ENCODE measurements at regions of chr14 and their contacts with region 1.

Region 1: GRCh38 chr14:93160353-93160801 is 24.3 kb downstream of the MOAP1 start:
- DNase-seq: no peak
- ATAC-seq: peak; percentile 48
- H3K4me3 ChIP-seq: no peak overlapping the region
- H3K27ac ChIP-seq: no peak overlapping the region
- H3K4me1 ChIP-seq: no peaks in the 10 kb centered on the region
- H3K27me3 ChIP-seq: no peaks in the 10 kb centered on the region
- CTCF ChIP-seq: peak; percentile 23 to 54 (median 47); a peak in 4 of 6 replicates
- EP300 ChIP-seq: no peak
- POLR2A ChIP-seq: no peak
- RAD21 ChIP-seq: peak; percentile 48

Region 2: GRCh38 chr14:92719890-92720323 is 440.5 kb before region 1 on chr14:
- CTCF ChIA-PET with region 1: interaction called, 3 read pairs
- POLR2A ChIA-PET with region 1: no interaction called
- RAD21 ChIA-PET with region 1: no interaction called
- SMC1A ChIA-PET with region 1: no interaction called
- in situ Hi-C with region 1: no loop called
- intact Hi-C with region 1: loop called (anchors 10 kb)
- DNase-seq: no peak
- ATAC-seq: no peak
- H3K4me3 ChIP-seq: no peak overlapping the region
- H3K27ac ChIP-seq: no peak overlapping the region
- H3K4me1 ChIP-seq: no peaks in the 10 kb centered on the region
- H3K27me3 ChIP-seq: no peaks in the 10 kb centered on the region
- CTCF ChIP-seq: no peak
- EP300 ChIP-seq: no peak
- POLR2A ChIP-seq: no peak
- RAD21 ChIP-seq: no peak

Region 3: DNA sequence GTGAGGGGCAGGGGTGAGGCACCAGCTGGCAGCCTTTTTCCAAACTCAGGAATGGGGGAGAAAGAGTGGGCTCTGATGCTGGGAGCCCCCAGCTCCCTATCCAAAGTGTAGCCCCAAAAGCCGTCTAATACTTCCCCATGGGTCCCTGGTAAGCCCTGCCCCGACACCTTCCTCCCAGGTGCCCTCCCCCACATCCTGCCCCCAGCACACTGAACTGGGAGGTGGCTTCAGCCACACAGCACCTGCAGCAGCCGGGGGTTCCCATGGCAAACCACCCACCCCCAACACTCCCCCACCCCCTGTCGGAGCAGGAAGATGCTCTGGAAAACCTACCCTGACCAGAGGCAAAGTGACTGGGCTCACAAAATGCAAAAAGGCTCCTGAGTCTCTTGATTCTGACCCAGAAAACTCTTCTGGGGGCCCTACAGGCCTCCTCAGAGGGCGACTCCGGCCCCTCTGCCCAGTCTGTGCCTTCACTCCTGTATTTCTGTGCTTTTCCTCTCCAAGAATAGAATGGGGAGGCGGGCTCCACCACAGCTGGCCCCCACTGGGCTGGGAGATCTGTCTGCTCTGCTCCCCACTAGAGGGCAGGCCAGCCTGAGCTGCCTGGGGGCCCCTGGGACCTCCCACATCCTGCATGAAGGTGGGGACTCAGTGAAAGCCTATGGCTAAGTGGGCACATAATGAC is 126.2 kb before region 1 on chr14:
- CTCF ChIA-PET with region 1: interaction called, 3 read pairs
- POLR2A ChIA-PET with region 1: no interaction called
- RAD21 ChIA-PET with region 1: no interaction called
- SMC1A ChIA-PET with region 1: interaction called, 3 read pairs
- in situ Hi-C with region 1: no loop called
- intact Hi-C with region 1: loop called (anchors 1 kb)
- DNase-seq: no peak
- ATAC-seq: peak; percentile 96
- H3K4me3 ChIP-seq: no peak overlapping the region
- H3K27ac ChIP-seq: peak overlapping the region; percentile 39
- H3K4me1 ChIP-seq: peaks cover 41% of the 10 kb centered on the region
- H3K27me3 ChIP-seq: no peaks in the 10 kb centered on the region
- CTCF ChIP-seq: peak; percentile 78 to 85 (median 82)
- EP300 ChIP-seq: no peak
- POLR2A ChIP-seq: no peak
- RAD21 ChIP-seq: peak; percentile 84

Region 4: DNA sequence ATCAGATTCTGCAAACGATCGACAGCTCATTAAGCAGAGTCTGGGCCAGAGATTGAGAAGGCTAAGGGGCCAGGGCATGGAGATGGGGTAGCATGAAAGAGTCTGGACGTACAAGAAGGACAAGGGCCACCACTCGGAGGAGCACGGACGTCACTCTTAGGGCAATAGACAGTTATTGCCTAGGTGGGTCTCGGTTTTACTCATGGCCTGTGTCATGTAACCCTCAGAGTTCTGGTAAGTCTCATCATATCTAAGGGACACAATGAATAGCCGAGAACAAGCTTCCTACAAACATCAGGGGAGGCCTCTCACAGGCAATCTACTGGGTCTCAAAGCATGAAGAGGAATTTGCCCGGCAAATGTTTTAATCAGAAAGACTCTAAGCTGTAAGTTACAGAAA is 14.3 kb before region 1 on chr14:
- CTCF ChIA-PET with region 1: interaction called, 9 read pairs
- POLR2A ChIA-PET with region 1: interaction called, 4 read pairs
- RAD21 ChIA-PET with region 1: interaction called, 9 read pairs
- SMC1A ChIA-PET with region 1: interaction called, 10 read pairs
- in situ Hi-C with region 1: no loop called
- intact Hi-C with region 1: no loop called
- DNase-seq: no peak
- ATAC-seq: peak; percentile 85
- H3K4me3 ChIP-seq: no peak overlapping the region
- H3K27ac ChIP-seq: no peak overlapping the region
- H3K4me1 ChIP-seq: peaks cover 4% of the 10 kb centered on the region; the same call in 1 of the 2 replicates
- H3K27me3 ChIP-seq: no peaks in the 10 kb centered on the region
- CTCF ChIP-seq: no peak
- EP300 ChIP-seq: peak in 1 of 2 experiments; percentile 64; a peak in 1 of 4 replicates
- POLR2A ChIP-seq: no peak
- RAD21 ChIP-seq: no peak

Region 5: DNA sequence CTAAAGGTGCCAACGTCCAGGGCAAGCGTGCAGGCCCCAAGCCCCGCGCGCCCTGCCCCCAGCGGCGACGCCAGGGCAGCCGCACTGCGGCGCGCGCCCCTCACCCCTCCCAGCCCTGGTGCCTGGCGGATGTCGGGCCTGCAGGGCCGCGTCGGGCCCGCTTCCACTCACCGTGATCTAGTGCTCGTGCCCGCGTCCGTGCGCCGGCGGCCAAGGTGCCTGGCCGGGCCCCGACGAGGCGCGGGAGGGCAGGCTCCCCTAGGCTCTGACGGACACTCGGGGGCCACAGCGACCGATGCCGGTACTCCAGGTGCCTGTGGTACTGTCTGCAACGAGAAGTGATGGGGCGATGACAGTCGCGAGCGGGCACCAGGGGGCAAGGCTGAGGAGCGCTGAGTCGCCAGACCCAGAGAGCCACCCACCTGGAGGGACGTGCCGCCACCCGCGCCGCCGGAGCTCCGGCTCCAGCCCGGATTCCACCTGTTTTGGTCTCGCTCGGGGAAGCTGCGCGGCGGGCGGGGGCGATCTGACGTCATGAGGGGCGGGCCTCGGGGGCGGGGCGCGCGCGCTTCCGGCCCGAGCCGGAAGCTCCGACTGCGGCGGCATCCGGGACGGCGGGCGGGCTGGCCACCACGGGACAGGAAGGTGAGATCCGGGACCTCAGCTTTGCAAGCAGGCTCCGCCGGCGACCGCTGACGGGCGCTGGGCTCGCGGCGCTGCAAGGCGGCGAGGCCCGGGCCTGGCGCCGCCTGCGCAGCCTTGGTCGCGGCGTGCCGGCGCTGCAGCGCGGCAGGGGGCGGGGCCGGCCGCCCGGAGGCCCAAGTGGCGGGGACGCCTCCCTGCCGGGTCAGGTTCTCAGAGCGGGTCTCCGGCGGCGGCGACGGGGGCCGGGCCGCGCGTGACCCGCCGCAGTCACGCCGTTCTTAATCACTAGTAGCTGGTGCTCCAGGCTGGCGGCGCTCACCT is 24.3 kb after region 1 on chr14 and contains the starts of genes LYSET and MOAP1:
- CTCF ChIA-PET with region 1: interaction called, 21 read pairs
- POLR2A ChIA-PET with region 1: interaction called, 5 read pairs
- RAD21 ChIA-PET with region 1: interaction called, 7 read pairs
- SMC1A ChIA-PET with region 1: interaction called, 69 read pairs
- in situ Hi-C with region 1: no loop called
- intact Hi-C with region 1: no loop called
- DNase-seq: no peak
- ATAC-seq: peak; percentile 92
- H3K4me3 ChIP-seq: peak within 1 kb of the TSS; percentile 88
- H3K27ac ChIP-seq: peak within 1 kb of the TSS; percentile 92
- H3K4me1 ChIP-seq: peaks cover 9% of the 10 kb centered on the region
- H3K27me3 ChIP-seq: no peaks in the 10 kb centered on the region
- CTCF ChIP-seq: peak; percentile 14 to 25 (median 25); a peak in 4 of 6 replicates
- EP300 ChIP-seq: no peak
- POLR2A ChIP-seq: peak; percentile 88
- RAD21 ChIP-seq: 0 out of 2 replicates have a peak, but pooled peaks have one; percentile 24
- polyA plus RNA-seq, gene LYSET: 33.4 to 34.5 TPM
- polyA plus RNA-seq, gene MOAP1: 3.1 to 5.2 TPM